Heart left ventricle (tissue), 16 donors: ENCODE measurements at regions of chr13 and their contacts with region 1.

Region 1: GRCh38 chr13:26561651-26562511 is 4.4 kb downstream of the WASF3 start:
- DNase-seq: no peak
- ATAC-seq: peak in 1 of 4 donors; percentile 10
- H3K4me3 ChIP-seq: no peak overlapping the region
- H3K27ac ChIP-seq: peak overlapping the region in 1 of 12 donors; percentile 13
- H3K4me1 ChIP-seq: peaks cover 0 to 24% (median 7%) of the 10 kb centered on the region in 12 donors
- H3K27me3 ChIP-seq: peaks cover 0 to 18% (median 0%) of the 10 kb centered on the region in 9 donors
- CTCF ChIP-seq: no peak
- POLR2A ChIP-seq: no peak

Region 2: GRCh38 chr13:26601669-26602068 is 39.8 kb after region 1 on chr13:
- intact Hi-C with region 1: loop called in 1 of 10 experiments (anchors 5 kb)
- DNase-seq: no peak
- ATAC-seq: no peak
- H3K4me3 ChIP-seq: no peak overlapping the region
- H3K27ac ChIP-seq: no peak overlapping the region
- H3K4me1 ChIP-seq: peaks cover 0 to 40% (median 14%) of the 10 kb centered on the region in 12 donors
- H3K27me3 ChIP-seq: no peaks in the 10 kb centered on the region
- CTCF ChIP-seq: peak in 2 of 12 donors; percentile 9 to 12
- POLR2A ChIP-seq: no peak